ENCODE measurements at regions of chr5 and their contacts with region 1.

Region 1: GRCh38 chr5:132820162-132820754 is 7.2 kb downstream of the SOWAHA start:
- DNase-seq: peak; percentile 88
- ATAC-seq: peak; percentile 81
- H3K4me3 ChIP-seq: peak overlapping the region; percentile 45 to 64 (median 50)
- H3K27ac ChIP-seq: peak overlapping the region; percentile 66
- H3K4me1 ChIP-seq: peaks cover 49% of the 10 kb centered on the region
- H3K27me3 ChIP-seq: no peaks in the 10 kb centered on the region
- CTCF ChIP-seq: peak; percentile 96
- EP300 ChIP-seq: peak in 1 of 2 experiments; percentile 23; a peak in 1 of 4 replicates
- POLR2A ChIP-seq: no peak
- RAD21 ChIP-seq: peak; percentile 98

Region 2: GRCh38 chr5:131622633-131623032 is 1197.6 kb before region 1 on chr5:
- CTCF ChIA-PET with region 1: no interaction called
- POLR2A ChIA-PET with region 1: no interaction called
- in situ Hi-C with region 1: no loop called
- intact Hi-C with region 1: no loop called
- DNase-seq: peak; percentile 53
- ATAC-seq: peak; percentile 56; the same call in 2 of the 3 replicates
- H3K4me3 ChIP-seq: no peak overlapping the region
- H3K27ac ChIP-seq: no peak overlapping the region
- H3K4me1 ChIP-seq: peaks cover 77% of the 10 kb centered on the region
- H3K27me3 ChIP-seq: no peaks in the 10 kb centered on the region
- CTCF ChIP-seq: no peak
- EP300 ChIP-seq: no peak
- POLR2A ChIP-seq: no peak
- RAD21 ChIP-seq: no peak

Region 3: GRCh38 chr5:132526290-132526973 is 293.8 kb before region 1 on chr5:
- CTCF ChIA-PET with region 1: no interaction called
- POLR2A ChIA-PET with region 1: interaction called, 4 read pairs
- in situ Hi-C with region 1: no loop called
- intact Hi-C with region 1: loop called (anchors 5 kb)
- DNase-seq: peak; percentile 66
- ATAC-seq: peak; percentile 93
- H3K4me3 ChIP-seq: peak overlapping the region; percentile 39 to 65 (median 44)
- H3K27ac ChIP-seq: no peak overlapping the region
- H3K4me1 ChIP-seq: peaks cover 14% of the 10 kb centered on the region
- H3K27me3 ChIP-seq: no peaks in the 10 kb centered on the region
- CTCF ChIP-seq: peak; percentile 85
- EP300 ChIP-seq: no peak
- POLR2A ChIP-seq: no peak
- RAD21 ChIP-seq: peak; percentile 82

Region 4: GRCh38 chr5:132754947-132755346 is 65.3 kb before region 1 on chr5:
- CTCF ChIA-PET with region 1: interaction called, 11 read pairs
- POLR2A ChIA-PET with region 1: interaction called, 6 read pairs
- in situ Hi-C with region 1: no loop called
- intact Hi-C with region 1: loop called (anchors 1 kb)
- DNase-seq: peak; percentile 49
- ATAC-seq: peak; percentile 82
- H3K4me3 ChIP-seq: no peak overlapping the region
- H3K27ac ChIP-seq: no peak overlapping the region
- H3K4me1 ChIP-seq: no peaks in the 10 kb centered on the region; the same call in 1 of the 2 replicates
- H3K27me3 ChIP-seq: no peaks in the 10 kb centered on the region
- CTCF ChIP-seq: peak; percentile 57
- EP300 ChIP-seq: no peak
- POLR2A ChIP-seq: no peak
- RAD21 ChIP-seq: peak; percentile 45; the same call in 1 of the 2 replicates

Region 5: GRCh38 chr5:132771503-132771998 is 48.7 kb before region 1 on chr5:
- CTCF ChIA-PET with region 1: no interaction called
- POLR2A ChIA-PET with region 1: interaction called, 10 read pairs
- in situ Hi-C with region 1: loop called (anchors 5 kb)
- intact Hi-C with region 1: loop called (anchors 1 kb)
- DNase-seq: peak; percentile 90
- ATAC-seq: peak; percentile 83
- H3K4me3 ChIP-seq: peak overlapping the region in 1 of 3 experiments; percentile 49; a peak in 1 of 6 replicates
- H3K27ac ChIP-seq: peak overlapping the region; percentile 71
- H3K4me1 ChIP-seq: peaks cover 57% of the 10 kb centered on the region
- H3K27me3 ChIP-seq: no peaks in the 10 kb centered on the region
- CTCF ChIP-seq: no peak
- EP300 ChIP-seq: no peak
- POLR2A ChIP-seq: peak in 1 of 2 experiments; percentile 44; a peak in 1 of 4 replicates
- RAD21 ChIP-seq: no peak

Region 6: DNA sequence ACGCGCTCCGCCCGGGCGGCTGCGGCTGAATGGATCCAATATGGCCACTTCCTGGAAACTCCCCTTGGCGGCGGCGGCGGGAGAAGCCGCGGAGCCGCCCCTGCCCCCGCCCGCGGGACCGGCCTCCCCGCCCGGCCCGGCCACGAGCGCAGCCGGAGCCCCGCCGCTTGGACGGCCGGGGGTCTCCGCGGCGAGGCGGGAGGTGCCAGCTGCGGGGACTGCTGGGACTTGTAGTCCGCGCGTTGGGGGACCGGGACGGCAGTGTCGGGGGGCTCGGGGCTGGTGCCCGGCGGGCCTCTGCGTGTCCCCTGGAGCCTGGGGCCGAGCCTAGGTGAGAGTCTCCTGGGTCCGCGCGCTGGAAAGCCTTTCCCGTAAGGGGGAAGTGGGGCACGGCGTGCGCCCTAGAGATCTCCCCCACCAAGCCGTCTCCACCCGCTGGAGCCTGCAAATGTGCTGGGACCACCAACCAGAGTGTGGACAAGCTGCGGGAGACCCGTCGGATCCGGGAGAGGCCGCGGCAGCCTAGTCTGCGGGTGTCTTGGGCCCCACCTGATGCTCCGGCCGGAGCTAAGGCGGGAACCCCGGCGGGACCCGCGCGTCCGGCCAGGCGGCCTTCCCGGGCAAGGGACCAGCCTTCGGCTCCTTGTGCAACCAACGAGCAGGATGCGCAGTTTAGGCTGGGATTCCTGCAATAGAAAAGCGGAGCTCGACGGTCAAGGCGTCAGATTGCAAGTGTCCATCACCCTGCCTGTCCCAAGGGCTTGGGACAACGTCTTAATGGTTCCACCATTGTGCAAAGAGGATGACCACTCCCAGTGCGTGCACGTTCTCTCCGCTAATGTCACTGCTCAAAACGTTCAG is 42.8 kb before region 1 on chr5 and contains the start of gene SEPTIN8:
- CTCF ChIA-PET with region 1: no interaction called
- POLR2A ChIA-PET with region 1: interaction called, 10 read pairs
- in situ Hi-C with region 1: loop called (anchors 5 kb)
- intact Hi-C with region 1: loop called (anchors 2 kb)
- DNase-seq: no peak
- ATAC-seq: peak; percentile 60
- H3K4me3 ChIP-seq: peak within 1 kb of the TSS; percentile 66 to 93 (median 72)
- H3K27ac ChIP-seq: peak within 1 kb of the TSS; percentile 55
- H3K4me1 ChIP-seq: peaks cover 47% of the 10 kb centered on the region
- H3K27me3 ChIP-seq: no peaks in the 10 kb centered on the region
- CTCF ChIP-seq: no peak
- EP300 ChIP-seq: no peak
- POLR2A ChIP-seq: peak; percentile 21 to 65; a peak in 3 of 4 replicates
- RAD21 ChIP-seq: no peak; the same call in 1 of the 2 replicates
- total RNA-seq, gene SEPTIN8: 49.9 and 50.7 TPM in 2 replicates

Region 7: DNA sequence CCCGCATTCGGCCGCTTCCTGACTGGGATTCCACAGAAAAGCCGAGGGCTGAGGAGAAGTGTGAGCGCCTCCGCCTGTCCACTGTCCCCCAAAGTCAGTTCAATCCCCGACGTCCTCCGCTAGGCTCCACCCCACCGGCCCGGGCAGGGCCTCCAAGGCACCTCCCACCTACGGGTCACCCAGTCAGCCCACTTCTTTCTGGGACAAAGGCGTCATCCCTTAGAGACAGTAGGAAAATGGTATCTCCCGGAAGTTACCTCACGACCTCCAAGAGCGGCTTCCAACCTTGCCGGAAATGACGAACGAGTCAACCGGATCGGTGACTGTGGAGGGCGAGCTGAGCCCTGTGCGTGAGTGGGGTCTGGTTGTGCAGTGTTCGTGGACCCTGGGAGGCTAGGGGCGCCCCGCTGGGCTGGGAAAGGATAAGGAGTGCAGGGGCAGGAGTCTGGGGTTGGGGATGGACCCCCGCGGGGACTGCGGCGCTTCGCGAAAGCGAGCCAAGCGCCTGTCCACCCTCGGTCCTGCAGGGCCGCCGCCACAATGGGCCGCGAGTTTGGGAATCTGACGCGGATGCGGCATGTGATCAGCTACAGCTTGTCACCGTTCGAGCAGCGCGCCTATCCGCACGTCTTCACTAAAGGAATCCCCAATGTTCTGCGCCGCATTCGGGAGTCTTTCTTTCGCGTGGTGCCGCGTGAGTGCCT is 46.2 kb after region 1 on chr5 and contains the starts of genes GDF9 and UQCRQ:
- CTCF ChIA-PET with region 1: no interaction called
- POLR2A ChIA-PET with region 1: interaction called, 11 read pairs
- in situ Hi-C with region 1: no loop called
- intact Hi-C with region 1: no loop called
- DNase-seq: peak; percentile 100
- ATAC-seq: peak; percentile 97
- H3K4me3 ChIP-seq: peak within 1 kb of the TSS; percentile 74 to 88 (median 87)
- H3K27ac ChIP-seq: peak within 1 kb of the TSS; percentile 86
- H3K4me1 ChIP-seq: peaks cover 60% of the 10 kb centered on the region
- H3K27me3 ChIP-seq: no peaks in the 10 kb centered on the region; a peak in 1 of 5 replicates
- CTCF ChIP-seq: peak; percentile 95
- EP300 ChIP-seq: peak in 1 of 2 experiments; percentile 54; a peak in 1 of 4 replicates
- POLR2A ChIP-seq: peak; percentile 90 to 95
- RAD21 ChIP-seq: peak; percentile 92
- total RNA-seq, gene GDF9: 0.07 and 0.38 TPM in 2 replicates
- total RNA-seq, gene UQCRQ: 575 and 610 TPM in 2 replicates

Region 8: GRCh38 chr5:132883261-132883834 is 63.1 kb after region 1 on chr5:
- CTCF ChIA-PET with region 1: no interaction called
- POLR2A ChIA-PET with region 1: no interaction called
- in situ Hi-C with region 1: no loop called
- intact Hi-C with region 1: loop called (anchors 2 kb)
- DNase-seq: peak; percentile 78
- ATAC-seq: peak; percentile 94
- H3K4me3 ChIP-seq: no peak overlapping the region
- H3K27ac ChIP-seq: peak overlapping the region; percentile 16
- H3K4me1 ChIP-seq: peaks cover 17% of the 10 kb centered on the region
- H3K27me3 ChIP-seq: no peaks in the 10 kb centered on the region
- CTCF ChIP-seq: peak; percentile 85
- EP300 ChIP-seq: no peak
- POLR2A ChIP-seq: no peak
- RAD21 ChIP-seq: peak; percentile 81

Region 9: GRCh38 chr5:132979367-132979940 is 159.2 kb after region 1 on chr5:
- CTCF ChIA-PET with region 1: no interaction called
- POLR2A ChIA-PET with region 1: no interaction called
- in situ Hi-C with region 1: no loop called
- intact Hi-C with region 1: no loop called
- DNase-seq: peak; percentile 9
- ATAC-seq: no peak
- H3K4me3 ChIP-seq: no peak overlapping the region
- H3K27ac ChIP-seq: no peak overlapping the region
- H3K4me1 ChIP-seq: peaks cover 6% of the 10 kb centered on the region
- H3K27me3 ChIP-seq: no peaks in the 10 kb centered on the region; a peak in 1 of 5 replicates
- CTCF ChIP-seq: no peak
- EP300 ChIP-seq: no peak
- POLR2A ChIP-seq: no peak
- RAD21 ChIP-seq: no peak

Measured in HepG2 (cell line).